GM13976 (cell line): ENCODE measurements at regions of chr1 and their contacts with region 1.

Region 1: GRCh38 chr1:9196129-9197040 is 38.2 kb upstream of the H6PD start:
- DNase-seq: peak; percentile 77
- CTCF ChIP-seq: peak; percentile 67

Region 2: DNA sequence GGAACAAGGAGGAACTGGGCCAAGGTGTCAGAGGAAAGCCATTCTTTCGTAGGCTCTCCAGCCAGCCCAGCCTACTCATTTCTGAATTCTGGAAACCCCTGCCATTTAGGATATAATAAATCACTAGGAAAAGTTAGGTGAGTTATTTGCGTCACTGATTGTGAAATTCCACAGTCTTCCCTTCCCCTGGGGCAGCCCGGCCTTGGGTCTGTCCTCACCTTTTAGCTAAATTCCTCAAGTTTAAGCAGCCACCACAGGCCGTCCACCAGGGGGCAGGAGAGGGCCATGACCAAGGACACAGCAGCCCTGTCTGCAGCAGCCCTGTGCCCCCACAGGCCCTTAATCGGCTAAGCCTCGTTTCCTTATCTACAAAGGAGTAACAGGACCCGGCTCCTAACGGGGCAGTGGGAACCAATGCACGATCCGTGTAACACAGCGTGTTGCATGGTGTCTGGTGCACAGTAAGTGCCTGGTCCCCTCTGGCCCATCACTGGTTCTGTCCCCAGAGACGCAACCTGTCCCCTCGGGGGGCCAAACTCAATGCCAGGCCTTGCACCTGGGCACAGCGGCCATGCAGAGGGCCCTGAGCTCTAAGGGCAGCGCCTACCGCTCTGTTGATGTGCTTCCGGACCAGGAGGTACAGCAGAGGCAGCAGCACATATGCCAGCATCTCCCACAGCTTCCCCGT is 85.6 kb before region 1 on chr1:
- in situ Hi-C with region 1: loop called (anchors 5 kb)
- DNase-seq: peak; percentile 87
- CTCF ChIP-seq: peak; percentile 86